Calu3 (cell line): ENCODE measurements at regions of chr18 and their contacts with region 1.

Region 1: DNA sequence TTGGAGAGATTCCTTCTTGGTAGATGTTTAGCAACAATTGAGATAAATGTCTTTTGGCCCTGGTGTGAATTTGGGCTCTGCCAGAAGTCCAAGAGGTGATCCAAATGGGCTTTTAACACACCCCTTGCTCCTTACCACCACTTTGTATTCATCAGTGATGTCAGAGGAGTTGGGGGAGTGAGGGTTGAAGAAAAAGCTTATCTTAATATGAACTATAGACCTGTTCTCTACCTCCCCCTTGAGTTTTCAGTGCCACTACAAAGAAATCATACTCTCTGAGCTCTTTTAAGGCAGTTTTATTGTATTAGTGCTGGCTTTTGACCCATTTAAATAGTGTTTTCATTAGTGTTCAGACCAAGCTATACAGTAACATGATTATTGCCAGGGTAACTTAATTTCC is 229.1 kb downstream of the PHLPP1 start:
- DNase-seq: no peak
- H3K4me3 Mint-ChIP-seq: no peak overlapping the region
- H3K27ac Mint-ChIP-seq: no peak overlapping the region
- H3K4me1 Mint-ChIP-seq: peaks cover 22% of the 10 kb centered on the region
- H3K27me3 Mint-ChIP-seq: no peaks in the 10 kb centered on the region
- CTCF ChIP-seq: no peak

Region 2: DNA sequence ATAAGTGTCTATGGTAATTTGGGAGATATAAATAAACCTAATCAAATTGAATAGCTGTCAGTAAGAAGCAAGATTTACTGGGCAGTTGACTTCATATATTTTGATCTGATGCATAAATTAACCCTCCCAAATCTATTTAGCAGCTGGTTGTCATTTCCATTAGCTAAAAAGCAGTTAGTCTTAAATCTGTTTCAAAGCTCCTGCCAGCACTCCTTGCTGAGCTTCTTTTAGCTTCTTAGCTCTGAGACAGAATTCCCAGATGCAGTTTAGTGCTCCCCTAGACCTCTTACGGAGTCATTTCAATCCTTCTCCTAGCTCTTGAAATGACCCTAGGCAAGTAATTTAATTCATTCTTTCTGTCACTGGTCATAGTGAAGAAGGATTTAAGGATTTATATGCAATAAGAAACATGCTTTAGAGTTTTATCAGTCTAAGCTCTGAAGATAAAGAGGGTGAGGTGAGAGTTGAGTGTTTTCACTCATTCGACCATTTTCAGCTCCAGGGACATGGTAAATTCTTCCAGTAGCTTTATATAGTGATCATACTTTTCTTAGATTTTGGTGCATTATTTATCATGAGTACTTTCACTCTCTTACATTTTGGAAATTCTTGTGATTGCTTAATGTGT is 130.2 kb before region 1 on chr18:
- CTCF ChIA-PET with region 1: no interaction called
- intact Hi-C with region 1: loop called (anchors 10 kb)
- DNase-seq: no peak
- H3K4me3 Mint-ChIP-seq: no peak overlapping the region
- H3K27ac Mint-ChIP-seq: no peak overlapping the region
- H3K4me1 Mint-ChIP-seq: peaks cover 54% of the 10 kb centered on the region
- H3K27me3 Mint-ChIP-seq: no peaks in the 10 kb centered on the region
- CTCF ChIP-seq: no peak

Region 3: GRCh38 chr18:62912885-62913284 is 31.6 kb before region 1 on chr18:
- CTCF ChIA-PET with region 1: no interaction called
- intact Hi-C with region 1: no loop called
- DNase-seq: no peak
- H3K4me3 Mint-ChIP-seq: no peak overlapping the region
- H3K27ac Mint-ChIP-seq: no peak overlapping the region
- H3K4me1 Mint-ChIP-seq: no peaks in the 10 kb centered on the region
- H3K27me3 Mint-ChIP-seq: no peaks in the 10 kb centered on the region
- CTCF ChIP-seq: no peak

Region 4: DNA sequence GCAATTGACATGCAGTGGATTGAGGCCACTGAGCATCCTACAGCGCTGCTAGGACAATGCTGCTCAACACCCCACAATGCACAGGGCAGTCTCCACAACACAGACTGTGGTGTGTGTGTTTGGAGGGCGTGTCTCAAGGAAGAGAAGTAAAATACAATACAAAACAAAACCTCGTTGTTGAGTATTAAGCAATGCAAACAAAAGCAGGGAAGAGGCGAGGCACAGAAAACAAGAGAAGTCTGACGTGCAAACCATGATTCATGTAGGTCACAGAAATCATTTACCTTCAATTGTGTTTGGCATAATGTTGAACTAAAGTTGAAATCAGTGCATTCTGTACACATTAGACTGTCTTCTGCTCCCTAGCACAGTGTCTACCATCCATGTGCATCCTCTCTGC is 31.8 kb after region 1 on chr18:
- CTCF ChIA-PET with region 1: no interaction called
- intact Hi-C with region 1: no loop called
- DNase-seq: peak; percentile 69
- H3K4me3 Mint-ChIP-seq: peak overlapping the region; percentile 18
- H3K27ac Mint-ChIP-seq: peak overlapping the region; percentile 37
- H3K4me1 Mint-ChIP-seq: peaks cover 45% of the 10 kb centered on the region
- H3K27me3 Mint-ChIP-seq: no peaks in the 10 kb centered on the region
- CTCF ChIP-seq: no peak